Activated naive CD4-positive, alpha-beta T cell treated with anti-CD3 and anti-CD28 coated beads for 36 hours (primary cell): ENCODE measurements at regions of chr11 and their contacts with region 1.

Region 1: DNA sequence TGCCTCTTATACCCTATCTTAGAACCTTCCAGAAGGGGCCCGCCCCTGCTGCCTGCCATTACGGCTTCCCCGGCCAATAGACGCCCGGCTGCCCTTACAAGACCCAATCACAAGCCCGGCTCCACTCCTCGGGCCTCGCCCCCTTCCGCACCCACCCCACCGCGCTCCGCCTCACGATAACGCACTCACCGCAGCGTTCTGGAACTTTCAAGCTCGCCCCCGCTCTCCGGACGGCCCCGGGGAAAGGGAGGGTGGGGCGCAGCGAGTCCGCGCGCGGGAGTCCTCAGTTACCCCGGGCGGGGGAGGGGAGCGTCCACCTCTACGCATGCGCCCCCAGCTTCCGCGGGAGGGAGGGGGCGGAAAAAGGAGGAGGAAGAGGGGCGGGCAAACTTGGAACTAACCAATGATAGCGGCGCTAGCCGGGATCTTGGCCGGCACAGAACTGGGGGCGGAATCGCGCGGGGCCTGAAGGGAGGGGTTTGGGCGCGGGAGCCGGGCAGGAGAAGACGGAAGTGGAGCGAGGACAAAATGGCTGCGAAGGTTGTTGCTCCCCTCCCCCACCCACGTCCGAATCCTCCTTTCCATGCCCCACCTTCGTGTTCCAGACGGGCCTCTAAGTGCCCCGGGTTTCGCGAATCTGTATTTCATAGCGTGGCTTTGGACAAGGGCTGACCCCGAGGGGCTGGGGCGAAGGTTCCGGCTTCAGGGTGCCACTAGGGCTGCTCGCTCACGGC is 389 bp upstream of the HSPA8 start:
- DNase-seq: peak; percentile 100
- H3K4me3 Mint-ChIP-seq: peak overlapping the region; percentile 97
- H3K27ac Mint-ChIP-seq: peak overlapping the region; percentile 99
- H3K4me1 Mint-ChIP-seq: peaks cover 40% of the 10 kb centered on the region
- H3K27me3 Mint-ChIP-seq: no peaks in the 10 kb centered on the region

Region 2: GRCh38 chr11:122743949-122744348 is 318.4 kb before region 1 on chr11:
- CTCF ChIA-PET with region 1: no interaction called
- intact Hi-C with region 1: loop called (anchors 1 kb)
- DNase-seq: peak; percentile 91
- H3K4me3 Mint-ChIP-seq: no peak overlapping the region
- H3K27ac Mint-ChIP-seq: no peak overlapping the region
- H3K4me1 Mint-ChIP-seq: peaks cover 5% of the 10 kb centered on the region
- H3K27me3 Mint-ChIP-seq: peaks cover 6% of the 10 kb centered on the region

Region 3: GRCh38 chr11:123103326-123103980 is 41.1 kb after region 1 on chr11:
- CTCF ChIA-PET with region 1: interaction called, 5 read pairs
- intact Hi-C with region 1: loop called (anchors 5 kb)
- DNase-seq: peak; percentile 55
- H3K4me3 Mint-ChIP-seq: no peak overlapping the region
- H3K27ac Mint-ChIP-seq: no peak overlapping the region
- H3K4me1 Mint-ChIP-seq: peaks cover 30% of the 10 kb centered on the region
- H3K27me3 Mint-ChIP-seq: no peaks in the 10 kb centered on the region

Region 4: GRCh38 chr11:123301696-123302400 is 239.5 kb after region 1 on chr11:
- CTCF ChIA-PET with region 1: no interaction called
- intact Hi-C with region 1: loop called (anchors 2 kb)
- DNase-seq: peak; percentile 82
- H3K4me3 Mint-ChIP-seq: peak overlapping the region; percentile 19
- H3K27ac Mint-ChIP-seq: peak overlapping the region; percentile 87
- H3K4me1 Mint-ChIP-seq: peaks cover 41% of the 10 kb centered on the region
- H3K27me3 Mint-ChIP-seq: peaks cover 6% of the 10 kb centered on the region

Region 5: GRCh38 chr11:123429913-123430720 is 367.8 kb after region 1 on chr11 and contains the start of gene GRAMD1B:
- CTCF ChIA-PET with region 1: no interaction called
- intact Hi-C with region 1: loop called (anchors 2 kb)
- DNase-seq: peak; percentile 87
- H3K4me3 Mint-ChIP-seq: peak within 1 kb of the TSS; percentile 92
- H3K27ac Mint-ChIP-seq: peak within 1 kb of the TSS; percentile 85
- H3K4me1 Mint-ChIP-seq: peaks cover 33% of the 10 kb centered on the region
- H3K27me3 Mint-ChIP-seq: peaks cover 2% of the 10 kb centered on the region
- total RNA-seq, gene GRAMD1B: 43.7 to 47.2 TPM